Transverse colon (tissue), 4 donors: ENCODE measurements at regions of chr4 and their contacts with region 1.

Region 1: DNA sequence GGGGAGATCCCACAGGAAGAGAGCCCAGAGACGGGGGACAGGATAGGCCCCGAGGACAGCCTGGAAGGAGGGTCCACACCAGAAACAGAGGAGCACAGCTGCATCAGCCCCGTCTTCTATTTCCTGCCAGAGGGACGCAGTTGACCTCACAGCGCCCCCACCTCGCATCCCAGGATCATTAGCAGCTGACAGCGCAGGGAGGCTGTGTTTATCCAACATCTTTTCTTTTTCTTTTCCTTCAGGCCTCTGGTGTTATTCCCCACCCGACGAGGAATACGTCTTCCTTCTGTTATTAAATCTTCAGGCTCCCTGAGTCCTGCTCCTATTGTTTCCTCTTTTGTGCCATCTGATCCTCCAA is 75.4 kb downstream of the DCHS2 start:
- DNase-seq: peak; percentile 20
- H3K4me3 ChIP-seq: peak overlapping the region; percentile 26 to 50 (median 30)
- H3K27ac ChIP-seq: peak overlapping the region; percentile 68 to 89 (median 80)
- H3K4me1 ChIP-seq: peaks cover 0 to 18% (median 8%) of the 10 kb centered on the region in 4 donors
- H3K27me3 ChIP-seq: peaks cover 11% of the 10 kb centered on the region
- CTCF ChIP-seq: no peak
- EP300 ChIP-seq: no peak
- POLR2A ChIP-seq: no peak

Region 2: DNA sequence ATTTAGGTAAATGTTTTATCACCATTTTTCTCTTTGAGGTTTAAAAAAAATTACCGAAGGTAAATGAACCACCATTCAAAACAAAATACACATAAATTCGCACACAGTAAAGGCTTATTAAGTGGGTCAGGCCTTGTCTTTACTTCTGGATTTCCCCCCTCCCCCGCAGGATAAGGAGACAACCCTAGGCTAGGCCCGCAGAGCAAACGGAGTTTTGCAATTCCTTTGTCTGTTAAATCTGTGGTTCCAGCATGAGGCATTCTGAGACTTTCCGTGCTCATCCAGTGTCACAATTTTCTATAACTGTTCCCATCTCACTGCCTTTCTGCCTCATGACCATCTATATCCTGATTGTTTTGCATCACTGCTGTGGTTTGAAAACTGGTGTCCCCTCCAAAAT is 231.9 kb before region 1 on chr4:
- in situ Hi-C with region 1: no loop called
- intact Hi-C with region 1: no loop called
- DNase-seq: no peak
- H3K4me3 ChIP-seq: no peak overlapping the region
- H3K27ac ChIP-seq: no peak overlapping the region
- H3K4me1 ChIP-seq: no peaks in the 10 kb centered on the region
- H3K27me3 ChIP-seq: no peaks in the 10 kb centered on the region
- CTCF ChIP-seq: no peak
- EP300 ChIP-seq: no peak
- POLR2A ChIP-seq: no peak

Region 3: GRCh38 chr4:154399259-154399974 is 16.8 kb before region 1 on chr4:
- in situ Hi-C with region 1: no loop called
- intact Hi-C with region 1: no loop called
- DNase-seq: no peak
- H3K4me3 ChIP-seq: peak overlapping the region in 3 of 4 donors; percentile 0 to 24 (median 16)
- H3K27ac ChIP-seq: peak overlapping the region; percentile 23 to 54 (median 43)
- H3K4me1 ChIP-seq: no peaks in the 10 kb centered on the region
- H3K27me3 ChIP-seq: no peaks in the 10 kb centered on the region
- CTCF ChIP-seq: peak; percentile 41 to 60 (median 46)
- EP300 ChIP-seq: no peak
- POLR2A ChIP-seq: no peak

Region 4: DNA sequence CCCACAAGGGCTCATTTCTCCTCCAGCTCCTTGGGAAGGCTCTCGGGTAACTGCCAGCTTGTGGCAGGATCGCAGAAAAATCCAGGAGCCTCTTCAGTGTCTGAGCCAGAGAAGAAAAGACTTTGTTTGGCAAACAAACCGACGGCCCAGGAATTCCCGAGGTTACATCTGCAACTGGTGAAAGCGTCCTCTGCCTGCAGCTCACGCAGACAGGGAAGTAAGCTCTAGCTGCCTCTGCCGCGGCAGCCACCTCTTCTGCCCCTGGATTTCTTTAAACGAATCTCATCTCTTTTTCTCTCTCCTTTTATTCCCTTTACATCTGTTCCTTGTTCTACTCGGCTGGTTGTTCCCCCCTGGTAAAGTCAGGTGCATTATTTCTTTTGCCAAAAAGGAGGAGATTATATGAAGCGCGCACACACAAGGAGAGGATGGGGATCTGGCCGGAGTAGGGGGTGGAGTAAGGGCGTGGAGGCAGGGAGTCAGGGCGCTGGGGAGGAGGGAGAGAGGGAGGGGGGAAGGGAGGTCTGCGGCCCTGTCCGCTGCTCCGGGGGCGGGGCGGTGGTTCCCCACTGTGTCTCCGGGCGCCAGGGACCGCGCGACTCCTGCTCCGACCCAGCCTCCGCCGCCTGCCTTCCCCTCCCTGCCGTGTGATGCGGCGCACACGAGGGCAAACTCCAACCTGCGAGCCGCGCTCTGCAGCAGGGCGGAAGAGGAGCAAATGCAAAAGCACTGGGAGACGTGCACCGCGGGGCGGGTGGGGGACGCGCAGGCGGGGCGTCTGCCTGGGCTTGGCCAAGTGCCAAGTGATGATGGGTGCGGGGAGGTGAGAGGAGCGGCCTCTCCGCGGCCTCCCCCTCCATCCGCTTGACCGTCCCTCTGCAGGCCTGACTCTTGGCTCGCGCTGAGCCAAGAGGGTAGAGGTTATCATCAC is 75.4 kb after region 1 on chr4 and contains the start of gene DCHS2:
- in situ Hi-C with region 1: no loop called
- intact Hi-C with region 1: loop called (anchors 5 kb)
- DNase-seq: peak; percentile 24
- H3K4me3 ChIP-seq: peak within 1 kb of the TSS; percentile 1 to 44 (median 24)
- H3K27ac ChIP-seq: peak within 1 kb of the TSS; percentile 53 to 82 (median 67)
- H3K4me1 ChIP-seq: peaks cover 0 to 22% (median 9%) of the 10 kb centered on the region in 4 donors
- H3K27me3 ChIP-seq: peaks cover 58% of the 10 kb centered on the region
- CTCF ChIP-seq: no peak
- EP300 ChIP-seq: no peak
- POLR2A ChIP-seq: no peak
- total RNA-seq, gene DCHS2: 0.60 to 20.6 (median 2.9) TPM